ENCODE measurements at regions of chr4 and their contacts with region 1.

Region 1: DNA sequence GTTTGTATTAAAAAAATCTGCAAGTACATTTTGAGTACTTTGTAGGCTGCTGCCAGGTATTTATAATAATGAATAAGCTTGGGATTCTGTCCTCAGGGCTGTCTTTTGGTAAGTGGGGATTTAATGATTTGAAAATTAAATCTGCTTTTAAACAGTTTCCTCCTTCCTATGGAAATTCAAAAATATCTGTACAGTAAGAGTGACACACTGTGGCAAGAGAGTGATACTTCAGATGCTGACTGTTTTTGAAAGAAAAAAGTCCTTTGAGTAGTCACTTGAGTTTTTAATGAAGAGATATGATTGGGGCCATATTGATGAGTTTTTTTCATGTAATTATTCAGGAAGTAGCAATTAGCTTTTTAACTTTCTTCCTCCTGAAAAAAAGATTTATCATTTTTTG is 49.2 kb downstream of the SMARCAD1 start:
- DNase-seq: no peak

Region 2: DNA sequence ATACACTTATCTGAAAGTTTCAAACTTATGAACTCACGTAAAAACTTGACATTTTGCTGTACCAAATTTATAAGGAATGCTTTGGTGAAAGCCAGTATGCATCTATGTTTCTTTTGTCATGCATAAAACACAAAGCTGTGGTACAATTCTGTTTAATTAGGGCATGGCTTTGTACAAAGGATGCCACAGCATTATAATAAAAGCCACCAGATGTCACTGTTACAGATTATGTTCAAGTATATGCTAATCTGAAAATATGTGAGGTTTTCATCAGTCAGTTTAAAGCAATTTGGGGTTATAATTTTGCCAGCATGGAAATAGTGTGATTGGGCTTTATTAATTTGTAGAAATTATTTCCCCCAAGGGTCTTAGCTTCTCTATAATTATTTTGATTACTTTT is 359.3 kb before region 1 on chr4:
- intact Hi-C with region 1: loop called (anchors 10 kb)
- DNase-seq: no peak

Region 3: DNA sequence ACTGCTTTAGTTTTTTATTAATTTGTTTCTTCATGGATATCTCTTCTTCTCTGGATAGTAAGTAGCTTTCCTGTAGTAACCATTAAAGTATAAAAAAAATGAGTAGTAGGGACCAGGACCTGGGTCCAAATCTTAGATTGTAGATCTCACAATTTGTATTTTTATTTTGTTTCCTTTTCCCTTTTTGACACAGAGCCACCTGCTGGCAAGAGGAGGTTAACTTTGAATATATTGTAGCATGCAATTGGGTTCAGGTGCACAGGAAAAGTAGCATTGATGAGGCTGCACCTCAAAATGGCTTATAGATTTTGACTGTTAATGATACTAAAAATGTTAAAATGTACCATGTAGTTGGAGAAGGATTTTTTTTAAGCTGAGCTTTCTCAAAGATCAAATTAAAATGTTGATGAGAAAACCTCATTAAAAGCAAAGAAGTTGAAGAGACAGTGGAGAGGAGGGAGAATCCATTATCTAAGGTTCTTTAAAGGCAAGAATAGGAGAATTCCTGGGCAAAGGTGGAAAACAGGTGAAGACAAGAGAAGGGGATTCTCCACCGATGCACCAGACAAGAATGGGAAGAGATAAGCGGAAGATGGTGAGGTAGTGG is 134.1 kb after region 1 on chr4:
- intact Hi-C with region 1: no loop called
- DNase-seq: no peak